ENCODE measurements at regions of chr6 and their contacts with region 1.

Region 1: DNA sequence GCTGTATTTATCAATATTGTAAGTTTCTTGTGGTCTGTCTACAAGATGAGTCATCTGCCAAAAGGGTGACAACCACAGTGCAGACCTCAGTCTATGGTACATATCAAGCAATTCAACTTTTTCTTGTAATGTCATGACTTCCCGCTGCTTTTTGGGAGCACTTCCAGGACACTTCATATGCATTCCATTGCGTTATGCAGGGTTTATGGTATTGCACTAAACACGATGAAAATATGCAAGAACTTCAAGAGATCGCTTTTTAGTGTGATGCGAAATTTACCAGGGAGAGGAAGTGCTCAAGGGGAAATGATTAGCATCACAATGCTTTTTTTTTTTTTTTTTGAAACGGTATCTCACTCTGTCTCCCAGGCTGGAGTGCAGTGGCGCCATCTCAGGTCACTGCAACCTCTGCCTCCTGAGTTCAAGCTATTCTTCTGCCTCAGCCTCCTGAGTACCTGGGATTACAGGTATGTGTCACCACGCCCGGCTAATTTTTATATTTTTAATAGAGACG is 166.4 kb downstream of the TFAP2A start:
- DNase-seq: peak; percentile 55 to 82
- H3K4me3 ChIP-seq: no peak overlapping the region
- H3K27ac ChIP-seq: no peak overlapping the region
- H3K4me1 ChIP-seq: 0 out of 2 replicates have a peak, but pooled peaks cover 7% of the 10 kb centered on the region
- H3K27me3 ChIP-seq: no peaks in the 10 kb centered on the region
- CTCF ChIP-seq: no peak

Region 2: DNA sequence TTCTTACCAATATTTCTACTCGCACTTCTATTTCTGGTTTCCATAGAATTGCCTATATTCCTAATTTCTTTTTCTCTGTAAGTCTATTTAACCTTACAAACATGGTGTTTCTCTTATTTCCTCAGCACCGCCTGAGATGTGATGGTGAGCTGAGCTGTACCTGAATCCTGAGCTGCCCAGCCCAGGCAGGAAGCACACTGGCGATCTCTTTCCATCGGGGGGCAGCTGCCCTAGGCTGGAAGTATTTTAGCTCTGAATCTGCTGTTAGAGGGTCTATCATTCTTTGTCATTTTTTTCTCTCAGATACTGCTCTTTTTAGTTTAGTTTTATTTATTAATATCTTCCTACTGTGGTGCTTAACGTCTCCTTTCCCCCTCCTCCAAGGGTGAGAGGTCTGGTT is 1639.7 kb before region 1 on chr6:
- CTCF ChIA-PET with region 1: no interaction called
- POLR2A ChIA-PET with region 1: interaction called, 10 read pairs
- intact Hi-C with region 1: no loop called
- DNase-seq: no peak
- H3K4me3 ChIP-seq: no peak overlapping the region
- H3K27ac ChIP-seq: no peak overlapping the region
- H3K4me1 ChIP-seq: no peaks in the 10 kb centered on the region
- H3K27me3 ChIP-seq: no peaks in the 10 kb centered on the region
- CTCF ChIP-seq: no peak

Region 3: GRCh38 chr6:10030942-10031537 is 217.4 kb before region 1 on chr6:
- CTCF ChIA-PET with region 1: no interaction called
- POLR2A ChIA-PET with region 1: interaction called, 5 read pairs
- intact Hi-C with region 1: loop called (anchors 5 kb)
- DNase-seq: no peak
- H3K4me3 ChIP-seq: no peak overlapping the region
- H3K27ac ChIP-seq: no peak overlapping the region
- H3K4me1 ChIP-seq: peaks cover 28% of the 10 kb centered on the region
- H3K27me3 ChIP-seq: no peaks in the 10 kb centered on the region
- CTCF ChIP-seq: peak; percentile 58

Region 4: DNA sequence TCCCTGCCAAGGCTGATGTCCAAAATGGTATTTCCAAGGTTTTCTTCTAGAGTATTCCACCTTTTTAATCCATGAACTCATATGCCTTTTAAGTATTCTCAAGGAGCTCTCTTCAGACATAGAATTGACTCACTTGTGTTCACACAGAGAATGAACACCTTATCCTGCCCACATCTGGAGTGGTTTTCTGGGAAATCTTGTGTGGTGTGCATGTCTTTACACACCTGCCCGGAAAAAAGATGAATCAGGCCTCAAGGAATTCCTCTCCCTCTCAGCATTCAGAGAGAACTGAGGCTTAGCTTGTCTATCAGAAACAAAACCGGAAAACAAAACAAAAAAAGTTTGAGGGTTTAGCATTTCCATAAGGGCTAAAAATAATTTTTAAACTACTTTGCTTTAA is 17.6 kb after region 1 on chr6:
- CTCF ChIA-PET with region 1: no interaction called
- POLR2A ChIA-PET with region 1: no interaction called
- intact Hi-C with region 1: no loop called
- DNase-seq: no peak
- H3K4me3 ChIP-seq: no peak overlapping the region
- H3K27ac ChIP-seq: no peak overlapping the region
- H3K4me1 ChIP-seq: no peaks in the 10 kb centered on the region
- H3K27me3 ChIP-seq: no peaks in the 10 kb centered on the region
- CTCF ChIP-seq: no peak

Measured in PC-9 (cell line).